Natural killer cell (primary cell): ENCODE measurements at regions of chr1 and their contacts with region 1.

Region 1: DNA sequence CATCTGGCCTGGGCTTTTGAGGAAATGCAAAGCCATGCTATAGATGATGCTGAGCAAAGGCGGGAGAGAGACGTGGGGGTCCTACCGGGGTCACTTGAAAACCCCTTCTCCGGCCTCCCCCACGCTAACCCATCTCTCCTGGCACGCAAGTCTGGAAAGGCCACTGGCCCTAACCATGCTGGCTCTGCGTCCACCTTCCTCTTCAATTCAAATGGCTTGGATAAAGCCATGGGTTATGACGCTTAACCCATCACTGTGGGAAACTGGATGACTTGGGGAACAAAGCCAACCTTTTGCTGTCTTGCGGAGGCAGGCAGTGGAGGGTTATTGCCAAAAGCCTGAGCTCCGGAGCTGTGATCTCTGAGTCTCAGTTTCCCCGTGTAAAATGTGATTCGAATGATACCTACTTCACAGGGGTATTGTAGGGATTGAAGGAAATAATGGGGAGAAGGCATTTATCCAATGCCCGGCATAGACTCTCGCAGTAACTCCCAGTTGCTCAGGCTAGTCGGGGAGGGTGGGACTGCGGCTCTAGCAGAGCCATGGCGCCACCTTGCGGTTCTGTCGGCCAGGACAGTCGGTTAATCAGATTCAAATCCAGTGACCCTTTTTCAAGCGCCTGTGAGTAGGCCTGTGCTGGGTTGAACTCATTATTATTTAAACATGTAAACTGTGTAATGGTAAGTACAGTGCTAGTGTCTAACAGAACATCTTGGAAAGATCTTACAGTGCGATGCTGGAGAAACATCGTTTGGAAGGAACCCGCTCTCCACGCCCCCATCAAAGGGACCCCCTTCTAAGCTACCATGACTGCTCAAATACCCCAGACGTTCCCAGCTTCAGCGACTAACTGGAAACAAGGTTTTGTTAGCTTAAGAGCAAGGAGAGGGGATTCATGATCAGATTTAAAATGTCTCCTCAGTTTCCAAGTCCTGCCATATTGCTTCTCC is 20.3 kb downstream of the NEK2 start:
- DNase-seq: peak; percentile 72 to 89
- ATAC-seq: peak; percentile 87 to 99 (median 98)
- H3K4me3 ChIP-seq: no peak overlapping the region
- H3K4me3 Mint-ChIP-seq: no peak overlapping the region
- H3K27ac ChIP-seq: no peak overlapping the region
- H3K27ac Mint-ChIP-seq: no peak overlapping the region
- H3K4me1 ChIP-seq: peaks cover 4% of the 10 kb centered on the region
- H3K4me1 Mint-ChIP-seq: peaks cover 5% of the 10 kb centered on the region in 2 donors
- H3K27me3 ChIP-seq: no peaks in the 10 kb centered on the region
- H3K27me3 Mint-ChIP-seq: no peaks in the 10 kb centered on the region
- CTCF ChIP-seq: peak; percentile 88

Region 2: GRCh38 chr1:210830034-210831028 is 824.8 kb before region 1 on chr1:
- intact Hi-C with region 1: no loop called
- DNase-seq: no peak
- ATAC-seq: no peak
- H3K4me3 ChIP-seq: no peak overlapping the region
- H3K4me3 Mint-ChIP-seq: no peak overlapping the region
- H3K27ac ChIP-seq: no peak overlapping the region
- H3K27ac Mint-ChIP-seq: no peak overlapping the region
- H3K4me1 ChIP-seq: no peaks in the 10 kb centered on the region
- H3K4me1 Mint-ChIP-seq: no peaks in the 10 kb centered on the region
- H3K27me3 ChIP-seq: no peaks in the 10 kb centered on the region
- H3K27me3 Mint-ChIP-seq: peaks cover 0 to 3% of the 10 kb centered on the region in 2 donors
- CTCF ChIP-seq: no peak

Region 3: GRCh38 chr1:211469938-211470529 is 185.1 kb before region 1 on chr1:
- intact Hi-C with region 1: loop called (anchors 1 kb)
- DNase-seq: peak; percentile 27 to 56
- ATAC-seq: peak in 1 of 3 donors; percentile 61
- H3K4me3 ChIP-seq: no peak overlapping the region
- H3K4me3 Mint-ChIP-seq: no peak overlapping the region
- H3K27ac ChIP-seq: no peak overlapping the region
- H3K27ac Mint-ChIP-seq: no peak overlapping the region
- H3K4me1 ChIP-seq: no peaks in the 10 kb centered on the region
- H3K4me1 Mint-ChIP-seq: no peaks in the 10 kb centered on the region
- H3K27me3 ChIP-seq: no peaks in the 10 kb centered on the region
- H3K27me3 Mint-ChIP-seq: peaks cover 0 to 10% of the 10 kb centered on the region in 2 donors
- CTCF ChIP-seq: peak; percentile 84

Region 4: GRCh38 chr1:211514030-211514754 is 140.9 kb before region 1 on chr1:
- intact Hi-C with region 1: loop called (anchors 1 kb)
- DNase-seq: peak; percentile 52 to 78
- ATAC-seq: peak; percentile 74 to 79 (median 78)
- H3K4me3 ChIP-seq: no peak overlapping the region
- H3K4me3 Mint-ChIP-seq: peak overlapping the region; percentile 75
- H3K27ac ChIP-seq: no peak overlapping the region
- H3K27ac Mint-ChIP-seq: peak overlapping the region in 1 of 2 donors; percentile 80
- H3K4me1 ChIP-seq: peaks cover 29% of the 10 kb centered on the region
- H3K4me1 Mint-ChIP-seq: peaks cover 10 to 20% of the 10 kb centered on the region in 2 donors
- H3K27me3 ChIP-seq: peaks cover 2% of the 10 kb centered on the region
- H3K27me3 Mint-ChIP-seq: peaks cover 0 to 3% of the 10 kb centered on the region in 2 donors
- CTCF ChIP-seq: peak; percentile 59